Left ventricle myocardium inferior (tissue), 1 donor: ENCODE measurements at regions of chr3 and their contacts with region 1.

Region 1: GRCh38 chr3:183188895-183189462 is 26.4 kb upstream of the LAMP3 start:
- DNase-seq: peak; percentile 28
- H3K4me3 ChIP-seq: no peak overlapping the region
- H3K27ac ChIP-seq: no peak overlapping the region
- H3K4me1 ChIP-seq: peaks cover 4% of the 10 kb centered on the region
- H3K27me3 ChIP-seq: no peaks in the 10 kb centered on the region
- CTCF ChIP-seq: peak; percentile 52

Region 2: DNA sequence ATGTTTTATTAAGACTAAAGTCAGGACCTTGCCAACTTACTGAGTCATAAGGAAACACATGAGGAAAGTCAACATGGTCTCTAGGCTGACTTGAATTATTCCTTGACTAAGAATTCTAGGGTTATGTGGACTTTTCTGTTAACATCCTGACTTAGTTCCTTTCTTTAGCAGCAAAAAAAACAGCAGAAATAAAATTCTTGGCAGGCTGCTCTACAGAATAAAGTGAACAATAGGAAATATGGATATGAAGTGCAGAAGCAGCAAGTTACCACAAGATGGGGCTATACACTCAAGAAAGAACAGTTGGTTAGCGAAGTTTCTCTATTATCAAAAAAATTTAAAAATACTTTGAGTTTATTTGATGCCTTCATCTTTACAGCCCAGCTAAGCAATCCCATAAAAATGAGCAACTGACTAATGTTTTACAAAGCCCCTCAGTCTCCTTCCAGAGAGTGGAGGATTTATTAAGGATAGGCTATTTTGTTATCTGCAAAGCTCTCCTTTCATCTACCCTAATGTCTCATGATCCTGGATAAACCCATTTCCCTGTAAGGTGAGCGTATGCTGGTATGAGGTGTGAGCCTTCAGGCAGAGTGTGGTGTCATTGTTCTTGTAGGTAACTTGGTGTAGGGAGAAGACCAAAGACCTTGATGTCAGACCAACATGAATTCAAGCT is 66.6 kb before region 1 on chr3:
- intact Hi-C with region 1: loop called (anchors 10 kb)
- DNase-seq: no peak
- H3K4me3 ChIP-seq: no peak overlapping the region
- H3K27ac ChIP-seq: no peak overlapping the region
- H3K4me1 ChIP-seq: peaks cover 5% of the 10 kb centered on the region
- H3K27me3 ChIP-seq: peaks cover 29% of the 10 kb centered on the region
- CTCF ChIP-seq: peak; percentile 90